ENCODE measurements at regions of chr10 and their contacts with region 1.

Region 1: GRCh38 chr10:89563861-89564478 is 28.6 kb upstream of the SLC16A12 start:
- DNase-seq: no peak
- H3K4me3 ChIP-seq: no peak overlapping the region
- H3K27ac ChIP-seq: no peak overlapping the region
- H3K27me3 ChIP-seq: no peaks in the 10 kb centered on the region
- CTCF ChIP-seq: peak; percentile 68

Region 2: GRCh38 chr10:89426230-89426868 is 137.6 kb before region 1 on chr10:
- CTCF ChIA-PET with region 1: interaction called, 20 read pairs
- POLR2A ChIA-PET with region 1: no interaction called
- DNase-seq: peak; percentile 50
- H3K4me3 ChIP-seq: no peak overlapping the region
- H3K27ac ChIP-seq: no peak overlapping the region
- H3K27me3 ChIP-seq: no peaks in the 10 kb centered on the region
- CTCF ChIP-seq: peak; percentile 84

Region 3: DNA sequence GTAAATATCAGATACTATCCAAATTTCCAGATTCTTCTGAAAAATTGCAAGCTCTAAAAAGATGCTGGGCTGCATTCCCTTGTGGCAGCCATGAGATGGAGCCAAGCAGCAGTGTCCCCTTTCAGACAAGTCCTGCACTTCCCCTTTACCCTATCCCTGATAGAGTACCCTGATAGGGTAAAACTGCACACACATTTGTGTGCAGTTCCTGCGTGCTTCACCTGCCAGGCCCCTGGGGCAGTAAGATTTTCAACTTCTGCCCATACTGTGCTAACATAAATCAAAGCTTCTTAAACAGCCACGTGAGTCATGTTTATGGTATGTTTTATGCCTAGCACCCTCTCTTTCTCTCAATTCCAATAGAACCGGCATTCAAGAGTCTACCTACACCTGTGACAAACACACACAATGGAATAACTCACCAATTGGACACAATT is 97.4 kb before region 1 on chr10:
- CTCF ChIA-PET with region 1: interaction called, 15 read pairs
- POLR2A ChIA-PET with region 1: no interaction called
- DNase-seq: no peak
- H3K4me3 ChIP-seq: no peak overlapping the region
- H3K27ac ChIP-seq: no peak overlapping the region
- H3K27me3 ChIP-seq: no peaks in the 10 kb centered on the region
- CTCF ChIP-seq: peak; percentile 64

Region 4: DNA sequence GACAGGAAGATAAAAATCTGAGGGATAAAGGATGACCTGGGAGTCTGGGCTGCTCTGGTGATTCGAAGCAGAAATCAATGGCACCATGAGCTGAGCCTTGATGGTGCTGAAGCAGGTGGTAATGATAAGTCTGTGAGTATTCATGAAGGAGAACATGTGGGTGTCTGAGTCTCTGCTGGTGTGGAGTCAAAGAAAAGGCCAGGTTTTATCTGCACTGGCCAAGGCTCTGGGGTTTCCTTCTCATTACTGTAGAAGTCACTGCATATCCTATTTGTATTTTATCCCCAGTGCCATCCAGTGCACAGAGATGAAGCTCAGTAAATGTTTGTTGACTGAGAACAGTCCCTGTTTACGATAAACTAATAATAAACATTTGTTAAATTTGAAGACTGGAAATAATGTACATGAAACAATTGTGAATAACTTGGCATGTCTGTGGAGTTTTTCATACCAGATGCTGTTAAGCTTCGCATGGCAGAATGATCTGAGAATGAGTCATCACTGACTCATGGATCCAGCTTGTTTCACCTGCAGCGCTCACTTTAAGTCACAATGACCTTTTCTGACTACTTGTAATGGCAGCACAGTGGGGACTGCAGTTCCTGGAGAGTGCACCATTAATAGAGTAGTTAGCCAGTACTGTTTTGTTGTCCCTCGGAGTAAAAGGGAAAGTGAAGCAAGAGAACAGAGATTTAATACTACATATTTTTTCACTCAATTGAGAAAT is 755.4 kb after region 1 on chr10:
- CTCF ChIA-PET with region 1: no interaction called
- POLR2A ChIA-PET with region 1: no interaction called
- DNase-seq: peak; percentile 62
- H3K4me3 ChIP-seq: no peak overlapping the region
- H3K27ac ChIP-seq: no peak overlapping the region
- H3K27me3 ChIP-seq: no peaks in the 10 kb centered on the region
- CTCF ChIP-seq: no peak

Measured in AG04450 (cell line).